Dorsolateral prefrontal cortex (tissue), 120 donors: ENCODE measurements at regions of chr19 and their contacts with region 1.

Region 1: GRCh38 chr19:16382775-16383543 is 58.3 kb downstream of the KLF2 start:
- DNase-seq: peak; percentile 57 to 86 (median 80)
- H3K4me3 ChIP-seq: peak overlapping the region in 2 of 59 donors; percentile 4 to 25
- H3K27ac ChIP-seq: peak overlapping the region in 56 of 59 donors; percentile 11 to 91 (median 72)
- H3K27me3 ChIP-seq: no peaks in the 10 kb centered on the region
- CTCF ChIP-seq: peak; percentile 62 to 90 (median 81)

Region 2: GRCh38 chr19:16247353-16248182 is 135.4 kb before region 1 on chr19:
- intact Hi-C with region 1: loop called (anchors 1 to 5 kb)
- DNase-seq: peak; percentile 61 to 85 (median 76)
- H3K4me3 ChIP-seq: no peak overlapping the region
- H3K27ac ChIP-seq: peak overlapping the region in 1 of 59 donors; percentile 9
- H3K27me3 ChIP-seq: no peaks in the 10 kb centered on the region
- CTCF ChIP-seq: peak; percentile 76 to 97 (median 93)